Activated T-helper 1 cell treated with anti-CD3 and anti-CD28 coated beads, Interleukin-12 subunit alpha, Interleukin-12 subunit beta, Interleukin-2, Interleukin-4 antibody, amounts not matched to agents 30 ng/mL and 10 ng/mL and 1 ng/mL, durations not matched to agents 14 hours and 24 hours and 36 hours (primary cell): ENCODE measurements at regions of chr2 and their contacts with region 1.

Region 1: GRCh38 chr2:33583194-33583938 is 15.7 kb downstream of the FAM98A start:
- DNase-seq: no peak
- H3K4me3 Mint-ChIP-seq: no peak overlapping the region
- H3K27ac Mint-ChIP-seq: no peak overlapping the region
- H3K4me1 Mint-ChIP-seq: peaks cover 13% of the 10 kb centered on the region
- H3K27me3 Mint-ChIP-seq: no peaks in the 10 kb centered on the region

Region 2: DNA sequence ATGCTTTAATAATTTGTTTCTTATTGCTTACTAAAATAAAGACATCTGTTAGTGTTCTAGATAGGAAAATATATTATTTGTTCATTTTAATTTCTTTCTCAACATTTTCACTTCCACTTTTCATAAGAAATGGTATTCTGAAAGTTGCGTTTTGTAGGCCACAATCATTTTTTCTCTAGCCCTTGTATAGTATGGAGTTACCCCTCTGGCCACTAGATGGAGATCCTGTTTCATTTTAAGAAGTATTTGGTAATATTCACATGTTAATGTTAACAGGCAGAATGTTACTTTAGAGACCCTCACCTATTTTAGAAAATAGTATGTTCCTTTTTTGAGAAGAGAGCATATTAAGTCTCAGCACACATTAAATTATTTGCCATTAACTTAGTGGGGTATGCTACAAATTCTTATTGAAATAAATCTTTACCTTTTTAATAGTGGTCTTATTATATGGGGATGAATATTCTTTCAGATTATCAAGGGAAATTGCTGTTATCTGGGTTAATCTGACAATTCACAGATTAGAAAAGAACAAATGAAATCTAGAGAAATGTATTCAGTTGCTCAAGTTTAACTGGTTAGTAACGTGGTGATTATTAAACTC is 1029.4 kb before region 1 on chr2:
- intact Hi-C with region 1: loop called (anchors 1 kb)
- DNase-seq: no peak
- H3K4me3 Mint-ChIP-seq: no peak overlapping the region
- H3K27ac Mint-ChIP-seq: no peak overlapping the region
- H3K4me1 Mint-ChIP-seq: no peaks in the 10 kb centered on the region
- H3K27me3 Mint-ChIP-seq: no peaks in the 10 kb centered on the region

Region 3: GRCh38 chr2:33033606-33034081 is 549.7 kb before region 1 on chr2:
- intact Hi-C with region 1: loop called (anchors 5 kb)
- DNase-seq: no peak
- H3K4me3 Mint-ChIP-seq: no peak overlapping the region
- H3K27ac Mint-ChIP-seq: no peak overlapping the region
- H3K4me1 Mint-ChIP-seq: no peaks in the 10 kb centered on the region
- H3K27me3 Mint-ChIP-seq: peaks cover 4% of the 10 kb centered on the region

Region 4: DNA sequence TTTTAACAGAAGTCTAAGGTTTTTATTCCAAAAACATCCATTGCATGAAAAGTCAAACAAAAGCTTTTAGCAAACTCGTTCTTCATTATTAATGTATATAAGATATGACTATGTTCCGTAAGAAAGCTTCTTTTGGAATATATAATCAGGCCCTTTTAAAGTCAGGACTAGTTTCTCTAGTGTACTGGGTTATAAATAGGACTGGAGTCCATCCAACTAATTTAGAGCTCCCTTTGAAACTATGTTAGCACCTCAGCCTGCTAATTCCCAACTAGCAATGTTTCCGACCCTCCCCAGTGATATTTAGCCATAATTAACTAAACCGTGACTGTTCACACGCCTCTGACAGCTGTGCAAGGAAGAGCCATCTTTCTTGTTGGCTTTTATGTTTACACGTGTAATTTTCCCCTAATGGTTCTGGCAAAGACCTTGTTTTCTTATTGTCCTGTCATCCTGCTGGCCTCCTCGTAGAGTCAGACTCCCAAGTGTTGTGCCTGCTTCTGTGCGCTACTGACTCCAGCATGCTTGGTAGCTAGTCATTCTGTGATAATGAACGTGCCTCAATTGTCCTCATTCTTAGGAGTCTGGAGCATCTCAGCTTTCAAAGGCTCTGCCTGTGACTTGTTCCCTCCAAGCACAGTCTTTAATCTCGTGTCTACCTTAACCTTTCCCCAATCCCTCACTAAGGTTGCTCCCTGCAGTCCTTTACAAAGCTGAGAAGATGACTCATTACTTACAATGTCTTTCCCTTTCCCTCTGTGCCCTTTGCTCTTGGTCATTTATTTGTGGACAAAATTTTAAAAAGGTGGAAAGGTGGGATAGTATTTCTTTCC is 279.1 kb before region 1 on chr2:
- intact Hi-C with region 1: no loop called
- DNase-seq: no peak
- H3K4me3 Mint-ChIP-seq: no peak overlapping the region
- H3K27ac Mint-ChIP-seq: no peak overlapping the region
- H3K4me1 Mint-ChIP-seq: no peaks in the 10 kb centered on the region
- H3K27me3 Mint-ChIP-seq: peaks cover 3% of the 10 kb centered on the region

Region 5: GRCh38 chr2:33372940-33373553 is 210.3 kb before region 1 on chr2:
- intact Hi-C with region 1: loop called (anchors 2 kb)
- DNase-seq: no peak
- H3K4me3 Mint-ChIP-seq: no peak overlapping the region
- H3K27ac Mint-ChIP-seq: no peak overlapping the region
- H3K4me1 Mint-ChIP-seq: no peaks in the 10 kb centered on the region
- H3K27me3 Mint-ChIP-seq: no peaks in the 10 kb centered on the region

Region 6: DNA sequence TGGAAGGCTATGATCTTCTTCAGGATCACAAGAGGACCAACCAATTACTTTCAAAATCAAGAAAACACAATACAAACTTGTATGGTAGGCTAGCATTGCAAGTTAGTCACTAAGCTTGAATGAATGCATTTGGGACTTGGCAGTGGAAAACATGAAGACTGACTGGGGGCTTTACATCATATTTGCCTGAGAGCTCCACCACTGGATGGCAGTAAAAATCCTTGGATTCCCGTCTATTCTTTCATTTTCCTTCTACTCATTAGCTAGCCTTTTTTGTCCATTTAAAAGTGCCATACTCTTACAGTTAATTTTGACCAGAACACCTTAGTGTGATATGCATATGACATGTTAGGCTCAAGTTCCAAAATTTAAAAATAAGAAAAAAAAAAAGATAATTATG is 170.4 kb before region 1 on chr2:
- intact Hi-C with region 1: loop called (anchors 1 kb)
- DNase-seq: no peak
- H3K4me3 Mint-ChIP-seq: no peak overlapping the region
- H3K27ac Mint-ChIP-seq: no peak overlapping the region
- H3K4me1 Mint-ChIP-seq: no peaks in the 10 kb centered on the region
- H3K27me3 Mint-ChIP-seq: peaks cover 12% of the 10 kb centered on the region

Region 7: DNA sequence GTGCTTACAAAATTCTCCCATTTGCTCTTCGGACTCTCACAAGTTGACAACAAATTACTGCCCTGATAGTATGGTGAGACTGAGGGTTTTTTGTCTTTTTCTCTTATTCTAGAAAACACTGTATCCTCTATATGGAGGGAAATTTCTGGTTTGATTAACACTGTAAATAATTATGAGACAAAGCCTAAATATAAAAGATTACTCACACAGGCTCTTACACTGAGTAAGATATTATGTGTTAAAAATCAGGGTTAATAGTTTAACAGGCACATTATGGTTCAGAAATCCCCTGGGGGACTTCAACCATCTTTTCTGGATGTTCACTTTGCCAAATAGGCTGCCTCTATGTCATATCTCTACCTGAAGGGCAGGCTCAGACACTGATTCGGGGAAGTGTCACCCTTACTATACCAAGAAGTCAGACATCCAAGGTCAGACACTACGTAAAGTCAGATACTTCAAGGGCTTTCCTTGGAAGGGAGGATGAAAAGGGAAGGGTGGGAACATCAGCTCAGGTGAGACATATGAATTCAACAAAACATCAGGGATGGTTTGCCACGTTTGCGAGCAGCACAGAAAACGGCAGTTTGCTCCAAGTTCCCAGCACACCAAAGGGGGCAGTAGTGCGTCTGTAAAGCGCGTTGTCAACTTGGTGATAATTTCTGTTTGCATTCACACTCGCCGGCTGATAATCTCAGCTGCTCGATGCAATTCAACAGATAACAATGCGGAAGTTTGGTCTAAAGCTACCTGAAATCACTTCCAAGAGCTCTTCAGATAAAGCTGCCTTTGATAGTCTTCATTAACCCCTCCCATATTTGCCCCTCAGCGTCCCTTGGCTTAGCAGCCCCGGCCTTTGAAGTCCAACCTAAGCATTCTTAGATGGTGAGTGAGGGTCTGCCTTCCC is 107.9 kb before region 1 on chr2:
- intact Hi-C with region 1: loop called (anchors 1 kb)
- DNase-seq: peak; percentile 75
- H3K4me3 Mint-ChIP-seq: peak overlapping the region; percentile 92
- H3K27ac Mint-ChIP-seq: peak overlapping the region; percentile 99
- H3K4me1 Mint-ChIP-seq: peaks cover 41% of the 10 kb centered on the region
- H3K27me3 Mint-ChIP-seq: peaks cover 7% of the 10 kb centered on the region

Region 8: GRCh38 chr2:33599175-33599942 is 16.0 kb after region 1 on chr2 and contains the start of gene FAM98A:
- intact Hi-C with region 1: loop called (anchors 1 kb)
- DNase-seq: peak; percentile 98
- H3K4me3 Mint-ChIP-seq: peak within 1 kb of the TSS; percentile 90
- H3K27ac Mint-ChIP-seq: peak within 1 kb of the TSS; percentile 94
- H3K4me1 Mint-ChIP-seq: peaks cover 35% of the 10 kb centered on the region
- H3K27me3 Mint-ChIP-seq: no peaks in the 10 kb centered on the region
- total RNA-seq, gene FAM98A: 58.1 and 59.8 TPM in 2 replicates